Naive thymus-derived CD4-positive, alpha-beta T cell (primary cell): ENCODE measurements at regions of chr4 and their contacts with region 1.

Region 1: DNA sequence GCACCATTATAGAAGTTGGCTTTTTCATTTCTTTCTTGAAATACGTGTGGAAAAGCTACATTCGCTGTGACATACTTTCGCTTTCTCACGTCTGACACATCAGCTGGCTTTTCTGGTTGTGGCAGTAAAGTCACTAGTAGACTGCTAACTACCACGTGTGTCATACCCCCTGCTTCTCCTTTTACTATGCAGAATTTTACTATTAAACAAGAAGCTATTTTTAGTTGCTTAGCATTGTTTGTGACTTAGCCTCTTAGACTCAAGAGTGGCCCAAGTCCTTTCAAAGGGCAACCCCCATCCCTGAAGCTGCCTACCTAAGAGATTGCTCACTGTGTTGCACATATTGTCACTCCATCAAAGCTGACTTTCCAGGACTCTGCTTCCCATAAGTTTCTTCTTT is 2.1 kb upstream of the IL2 start:
- DNase-seq: peak in 6 of 9 donors; percentile 19 to 41 (median 34)
- ATAC-seq: peak; percentile 76
- H3K4me3 ChIP-seq: peak overlapping the region; percentile 33
- H3K4me3 Mint-ChIP-seq: peak overlapping the region; percentile 74 to 91 (median 86)
- H3K27ac ChIP-seq: no peak overlapping the region
- H3K27ac Mint-ChIP-seq: peak overlapping the region; percentile 66 to 86 (median 77)
- H3K4me1 ChIP-seq: peaks cover 25 to 46% of the 10 kb centered on the region in 2 donors
- H3K4me1 Mint-ChIP-seq: peaks cover 20 to 55% (median 50%) of the 10 kb centered on the region in 7 donors
- H3K27me3 ChIP-seq: no peaks in the 10 kb centered on the region
- H3K27me3 Mint-ChIP-seq: no peaks in the 10 kb centered on the region

Region 2: DNA sequence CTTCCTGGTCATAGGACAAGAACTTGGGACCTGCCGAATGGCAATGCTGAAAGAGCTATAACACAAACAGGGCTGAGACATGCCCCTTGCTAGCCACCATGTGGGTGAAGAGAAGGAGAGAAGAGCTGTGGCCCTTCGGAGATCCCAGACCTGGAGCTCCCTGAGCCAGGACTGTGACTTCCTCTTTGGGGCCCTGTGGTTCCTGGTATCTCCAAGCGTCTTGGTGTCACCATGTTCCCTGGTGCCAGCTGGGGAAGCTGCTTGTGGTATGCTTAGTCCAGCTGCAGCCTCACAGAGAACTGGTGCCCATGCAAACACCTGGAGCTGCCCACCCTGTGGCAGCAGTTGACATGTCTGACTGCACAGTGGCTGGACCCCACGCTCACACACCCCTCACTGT is 1454.8 kb before region 1 on chr4:
- CTCF ChIA-PET with region 1: no interaction called
- POLR2A ChIA-PET with region 1: no interaction called
- intact Hi-C with region 1: no loop called
- DNase-seq: no peak
- ATAC-seq: no peak
- H3K4me3 ChIP-seq: no peak overlapping the region
- H3K4me3 Mint-ChIP-seq: no peak overlapping the region
- H3K27ac ChIP-seq: no peak overlapping the region
- H3K27ac Mint-ChIP-seq: no peak overlapping the region
- H3K4me1 ChIP-seq: peaks cover 0 to 9% of the 10 kb centered on the region in 2 donors
- H3K4me1 Mint-ChIP-seq: peaks cover 0 to 36% (median 29%) of the 10 kb centered on the region in 7 donors
- H3K27me3 ChIP-seq: no peaks in the 10 kb centered on the region
- H3K27me3 Mint-ChIP-seq: peaks cover 0 to 8% (median 0%) of the 10 kb centered on the region in 5 donors

Region 3: GRCh38 chr4:121950212-121950679 is 508.4 kb before region 1 on chr4:
- CTCF ChIA-PET with region 1: no interaction called
- POLR2A ChIA-PET with region 1: no interaction called
- intact Hi-C with region 1: loop called (anchors 5 to 10 kb)
- DNase-seq: peak; percentile 53 to 88 (median 68)
- ATAC-seq: peak; percentile 87
- H3K4me3 ChIP-seq: peak overlapping the region; percentile 50
- H3K4me3 Mint-ChIP-seq: peak overlapping the region; percentile 84 to 95 (median 88)
- H3K27ac ChIP-seq: no peak overlapping the region
- H3K27ac Mint-ChIP-seq: peak overlapping the region in 4 of 9 donors; percentile 10 to 45 (median 20)
- H3K4me1 ChIP-seq: no peaks in the 10 kb centered on the region
- H3K4me1 Mint-ChIP-seq: peaks cover 0 to 26% (median 17%) of the 10 kb centered on the region in 7 donors
- H3K27me3 ChIP-seq: peaks cover 0 to 11% of the 10 kb centered on the region in 2 donors
- H3K27me3 Mint-ChIP-seq: peaks cover 32 to 65% (median 47%) of the 10 kb centered on the region in 5 donors

Region 4: DNA sequence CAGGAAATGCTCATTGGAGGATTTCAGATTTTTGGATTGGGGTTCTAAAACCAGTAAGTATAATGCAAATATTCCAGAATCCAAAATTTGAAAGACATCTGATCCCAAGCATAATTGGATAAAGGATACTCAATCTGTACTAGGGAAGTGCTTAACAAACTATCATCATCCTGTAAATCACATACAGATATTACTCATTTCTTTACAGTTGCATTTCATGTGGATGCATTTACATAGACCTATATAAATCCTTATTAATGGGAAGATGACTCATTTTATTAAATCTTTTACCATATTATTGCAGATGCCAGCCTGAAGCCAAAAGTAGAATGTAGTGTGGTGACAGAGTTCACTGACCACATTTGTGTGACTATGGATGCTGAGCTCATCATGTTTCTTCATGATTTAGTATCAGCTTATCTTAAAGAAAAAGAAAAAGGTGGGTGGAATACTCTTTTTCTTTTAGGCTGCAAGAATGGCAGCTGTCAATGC is 102.3 kb before region 1 on chr4:
- CTCF ChIA-PET with region 1: no interaction called
- POLR2A ChIA-PET with region 1: no interaction called
- intact Hi-C with region 1: loop called in 1 of 2 experiments (anchors 10 kb)
- DNase-seq: no peak
- ATAC-seq: no peak
- H3K4me3 ChIP-seq: no peak overlapping the region
- H3K4me3 Mint-ChIP-seq: no peak overlapping the region
- H3K27ac ChIP-seq: no peak overlapping the region
- H3K27ac Mint-ChIP-seq: no peak overlapping the region
- H3K4me1 ChIP-seq: no peaks in the 10 kb centered on the region
- H3K4me1 Mint-ChIP-seq: peaks cover 0 to 8% (median 3%) of the 10 kb centered on the region in 7 donors
- H3K27me3 ChIP-seq: no peaks in the 10 kb centered on the region
- H3K27me3 Mint-ChIP-seq: no peaks in the 10 kb centered on the region

Region 5: DNA sequence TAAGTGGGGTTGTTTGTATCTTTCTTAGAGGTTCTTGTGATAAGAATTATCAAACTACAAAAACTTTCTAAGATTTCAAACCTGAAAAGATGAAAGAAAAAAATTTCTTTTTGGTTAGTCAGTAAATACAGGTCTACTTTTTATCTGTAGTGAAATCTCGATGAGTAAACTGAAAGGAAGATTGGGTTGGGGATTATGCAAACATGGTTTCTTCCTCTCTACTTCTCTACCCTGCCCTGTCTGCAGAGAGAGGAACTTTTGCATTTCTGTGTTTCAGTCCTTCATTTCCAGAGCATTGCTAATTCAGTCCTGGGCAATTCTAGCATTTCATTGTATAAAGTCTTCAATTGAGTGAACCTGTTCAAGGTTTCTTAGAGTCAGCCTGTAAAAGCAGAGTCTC is 49.5 kb after region 1 on chr4:
- CTCF ChIA-PET with region 1: no interaction called
- POLR2A ChIA-PET with region 1: no interaction called
- intact Hi-C with region 1: loop called in 1 of 2 experiments (anchors 2 kb)
- DNase-seq: peak in 1 of 9 donors; percentile 4
- ATAC-seq: peak; percentile 49
- H3K4me3 ChIP-seq: no peak overlapping the region
- H3K4me3 Mint-ChIP-seq: peak overlapping the region in 6 of 10 donors; percentile 20 to 68 (median 24)
- H3K27ac ChIP-seq: no peak overlapping the region
- H3K27ac Mint-ChIP-seq: peak overlapping the region in 1 of 9 donors; percentile 81
- H3K4me1 ChIP-seq: no peaks in the 10 kb centered on the region
- H3K4me1 Mint-ChIP-seq: peaks cover 0 to 38% (median 10%) of the 10 kb centered on the region in 7 donors
- H3K27me3 ChIP-seq: no peaks in the 10 kb centered on the region
- H3K27me3 Mint-ChIP-seq: peaks cover 0 to 12% (median 0%) of the 10 kb centered on the region in 5 donors

Region 6: GRCh38 chr4:122703868-122704267 is 245.2 kb after region 1 on chr4:
- CTCF ChIA-PET with region 1: no interaction called
- POLR2A ChIA-PET with region 1: no interaction called
- intact Hi-C with region 1: loop called in 1 of 2 experiments (anchors 5 kb)
- DNase-seq: no peak
- ATAC-seq: no peak
- H3K4me3 ChIP-seq: no peak overlapping the region
- H3K4me3 Mint-ChIP-seq: no peak overlapping the region
- H3K27ac ChIP-seq: no peak overlapping the region
- H3K27ac Mint-ChIP-seq: no peak overlapping the region
- H3K4me1 ChIP-seq: no peaks in the 10 kb centered on the region
- H3K4me1 Mint-ChIP-seq: peaks cover 0 to 63% (median 5%) of the 10 kb centered on the region in 7 donors
- H3K27me3 ChIP-seq: no peaks in the 10 kb centered on the region
- H3K27me3 Mint-ChIP-seq: peaks cover 0 to 4% (median 0%) of the 10 kb centered on the region in 5 donors